CD8-positive, alpha-beta T cell (primary cell): ENCODE measurements at regions of chr10 and their contacts with region 1.

Region 1: DNA sequence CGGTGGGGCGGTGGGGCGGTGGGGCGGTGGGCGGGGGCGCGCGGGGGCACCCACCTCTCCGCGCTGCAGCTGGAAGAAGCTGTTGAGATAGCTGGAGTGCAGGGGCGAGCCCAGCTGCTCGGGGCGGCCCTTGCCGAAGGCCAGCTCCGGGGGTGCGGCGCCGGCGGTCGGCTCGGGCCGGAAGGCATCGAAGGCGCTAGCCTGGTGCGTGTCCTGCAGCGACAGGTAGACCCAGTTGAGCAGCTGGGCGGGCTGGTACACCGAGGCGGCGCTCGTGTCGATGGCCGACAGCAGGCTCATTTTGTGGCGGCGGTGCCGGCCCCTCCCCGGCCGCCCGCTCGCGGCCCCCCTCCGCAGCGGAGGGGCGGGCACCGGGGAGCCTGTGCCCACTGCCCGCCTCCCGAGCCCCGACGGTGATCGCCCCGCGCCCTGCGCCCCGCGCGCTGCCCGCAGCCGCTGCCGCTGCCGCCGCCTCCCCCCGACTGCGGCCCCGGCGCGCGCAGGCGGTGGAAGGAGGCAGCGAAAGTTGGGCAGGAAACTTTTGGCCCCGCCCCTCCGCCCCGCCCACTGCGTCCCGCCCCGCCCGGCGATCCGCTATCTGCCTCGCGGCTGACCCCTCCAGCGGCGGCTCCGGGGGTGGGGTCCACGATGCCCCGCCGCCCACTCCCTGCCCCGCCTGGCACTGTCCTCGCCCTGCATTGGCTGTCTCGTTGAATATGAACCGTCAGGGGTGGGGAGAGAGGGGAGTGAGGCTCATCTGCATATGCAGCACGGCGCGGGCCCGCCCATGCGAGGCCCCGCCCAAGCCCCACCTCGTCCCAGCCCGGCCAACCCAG is at the start of gene ZCCHC24:
- DNase-seq: peak; percentile 90 to 98 (median 94)
- ATAC-seq: peak; percentile 93
- H3K4me3 ChIP-seq: peak within 1 kb of the TSS; percentile 55 to 59
- H3K4me3 Mint-ChIP-seq: peak within 1 kb of the TSS; percentile 85
- H3K27ac ChIP-seq: peak within 1 kb of the TSS; percentile 14 to 22
- H3K27ac Mint-ChIP-seq: peak within 1 kb of the TSS; percentile 67
- H3K4me1 ChIP-seq: peaks cover 24% of the 10 kb centered on the region
- H3K4me1 Mint-ChIP-seq: peaks cover 24% of the 10 kb centered on the region
- H3K27me3 ChIP-seq: no peaks in the 10 kb centered on the region
- H3K27me3 Mint-ChIP-seq: no peaks in the 10 kb centered on the region
- CTCF ChIP-seq: no peak
- total RNA-seq, gene ZCCHC24: 1.1 to 1.9 TPM

Region 2: GRCh38 chr10:78029269-78030226 is 1415.8 kb before region 1 on chr10 and contains the start of gene POLR3A:
- CTCF ChIA-PET with region 1: no interaction called
- POLR2A ChIA-PET with region 1: no interaction called
- intact Hi-C with region 1: loop called (anchors 2 kb)
- DNase-seq: peak; percentile 81 to 97 (median 90)
- ATAC-seq: peak; percentile 56
- H3K4me3 ChIP-seq: peak within 1 kb of the TSS; percentile 92 to 99
- H3K4me3 Mint-ChIP-seq: peak within 1 kb of the TSS; percentile 99
- H3K27ac ChIP-seq: peak within 1 kb of the TSS; percentile 55 to 70
- H3K27ac Mint-ChIP-seq: peak within 1 kb of the TSS; percentile 95
- H3K4me1 ChIP-seq: peaks cover 17% of the 10 kb centered on the region
- H3K4me1 Mint-ChIP-seq: peaks cover 40% of the 10 kb centered on the region
- H3K27me3 ChIP-seq: no peaks in the 10 kb centered on the region
- H3K27me3 Mint-ChIP-seq: no peaks in the 10 kb centered on the region
- CTCF ChIP-seq: peak; percentile 75
- total RNA-seq, gene POLR3A: 5.9 to 7.0 TPM

Region 3: GRCh38 chr10:78972947-78973900 is 472.1 kb before region 1 on chr10:
- CTCF ChIA-PET with region 1: no interaction called
- POLR2A ChIA-PET with region 1: no interaction called
- intact Hi-C with region 1: loop called in 1 of 2 experiments (anchors 5 kb)
- DNase-seq: peak; percentile 11 to 89 (median 68)
- ATAC-seq: peak; percentile 69
- H3K4me3 ChIP-seq: peak overlapping the region; percentile 39 to 54
- H3K4me3 Mint-ChIP-seq: peak overlapping the region; percentile 83
- H3K27ac ChIP-seq: peak overlapping the region in 1 of 2 experiments; percentile 19
- H3K27ac Mint-ChIP-seq: peak overlapping the region; percentile 80
- H3K4me1 ChIP-seq: peaks cover 14% of the 10 kb centered on the region
- H3K4me1 Mint-ChIP-seq: peaks cover 14% of the 10 kb centered on the region
- H3K27me3 ChIP-seq: no peaks in the 10 kb centered on the region
- H3K27me3 Mint-ChIP-seq: no peaks in the 10 kb centered on the region
- CTCF ChIP-seq: no peak

Region 4: DNA sequence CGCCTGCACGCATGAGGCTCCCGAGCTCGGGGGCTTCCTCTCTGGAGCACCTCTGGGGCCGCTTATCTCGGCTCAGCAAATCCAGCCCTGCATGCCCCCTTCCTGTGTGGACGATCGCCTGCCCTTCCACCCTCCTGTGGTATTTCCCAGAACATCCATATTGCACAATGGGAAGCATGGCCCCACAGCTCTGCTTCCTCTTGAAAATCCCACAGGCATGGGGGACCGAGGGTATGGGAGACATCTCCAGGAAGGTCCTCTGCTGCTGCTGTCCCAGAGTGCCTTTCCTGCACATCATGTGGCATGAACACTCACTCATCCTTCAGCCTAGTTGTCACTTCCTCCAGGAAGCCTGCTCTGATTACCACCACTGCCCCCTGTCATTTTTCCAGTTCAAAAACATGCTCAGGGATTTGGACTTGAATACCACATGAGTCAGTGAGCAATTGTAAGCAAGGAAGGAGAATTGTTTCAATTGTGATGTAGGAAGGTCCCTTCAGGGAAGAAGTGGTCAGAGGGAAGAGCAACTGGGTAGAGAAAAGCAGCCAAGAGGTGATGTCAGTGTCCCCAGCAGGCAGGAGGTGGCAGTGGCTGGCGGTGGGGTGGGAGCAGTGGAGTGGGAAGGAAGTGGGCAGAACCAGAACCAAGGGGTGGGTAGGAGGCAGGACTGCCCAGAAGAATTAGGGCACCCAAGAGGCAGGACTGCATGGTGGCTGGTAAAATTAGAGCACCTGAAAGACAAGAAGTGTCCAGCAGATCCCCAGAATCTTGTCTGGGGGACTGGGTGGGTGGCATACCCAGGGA is 444.1 kb before region 1 on chr10:
- CTCF ChIA-PET with region 1: no interaction called
- POLR2A ChIA-PET with region 1: no interaction called
- intact Hi-C with region 1: no loop called
- DNase-seq: no peak
- ATAC-seq: no peak
- H3K4me3 ChIP-seq: no peak overlapping the region
- H3K4me3 Mint-ChIP-seq: no peak overlapping the region
- H3K27ac ChIP-seq: no peak overlapping the region
- H3K27ac Mint-ChIP-seq: no peak overlapping the region
- H3K4me1 ChIP-seq: no peaks in the 10 kb centered on the region
- H3K4me1 Mint-ChIP-seq: peaks cover 8% of the 10 kb centered on the region
- H3K27me3 ChIP-seq: no peaks in the 10 kb centered on the region
- H3K27me3 Mint-ChIP-seq: peaks cover 3% of the 10 kb centered on the region
- CTCF ChIP-seq: no peak

Region 5: GRCh38 chr10:79242620-79243152 is 202.7 kb before region 1 on chr10:
- CTCF ChIA-PET with region 1: no interaction called
- POLR2A ChIA-PET with region 1: no interaction called
- intact Hi-C with region 1: loop called (anchors 2 to 5 kb)
- DNase-seq: peak in 8 of 9 experiments; percentile 13 to 80 (median 51)
- ATAC-seq: peak; percentile 51
- H3K4me3 ChIP-seq: peak overlapping the region; percentile 49 to 61
- H3K4me3 Mint-ChIP-seq: peak overlapping the region; percentile 76
- H3K27ac ChIP-seq: peak overlapping the region in 1 of 2 experiments; percentile 39
- H3K27ac Mint-ChIP-seq: no peak overlapping the region
- H3K4me1 ChIP-seq: peaks cover 33% of the 10 kb centered on the region
- H3K4me1 Mint-ChIP-seq: peaks cover 42% of the 10 kb centered on the region
- H3K27me3 ChIP-seq: no peaks in the 10 kb centered on the region
- H3K27me3 Mint-ChIP-seq: no peaks in the 10 kb centered on the region
- CTCF ChIP-seq: no peak

Region 6: DNA sequence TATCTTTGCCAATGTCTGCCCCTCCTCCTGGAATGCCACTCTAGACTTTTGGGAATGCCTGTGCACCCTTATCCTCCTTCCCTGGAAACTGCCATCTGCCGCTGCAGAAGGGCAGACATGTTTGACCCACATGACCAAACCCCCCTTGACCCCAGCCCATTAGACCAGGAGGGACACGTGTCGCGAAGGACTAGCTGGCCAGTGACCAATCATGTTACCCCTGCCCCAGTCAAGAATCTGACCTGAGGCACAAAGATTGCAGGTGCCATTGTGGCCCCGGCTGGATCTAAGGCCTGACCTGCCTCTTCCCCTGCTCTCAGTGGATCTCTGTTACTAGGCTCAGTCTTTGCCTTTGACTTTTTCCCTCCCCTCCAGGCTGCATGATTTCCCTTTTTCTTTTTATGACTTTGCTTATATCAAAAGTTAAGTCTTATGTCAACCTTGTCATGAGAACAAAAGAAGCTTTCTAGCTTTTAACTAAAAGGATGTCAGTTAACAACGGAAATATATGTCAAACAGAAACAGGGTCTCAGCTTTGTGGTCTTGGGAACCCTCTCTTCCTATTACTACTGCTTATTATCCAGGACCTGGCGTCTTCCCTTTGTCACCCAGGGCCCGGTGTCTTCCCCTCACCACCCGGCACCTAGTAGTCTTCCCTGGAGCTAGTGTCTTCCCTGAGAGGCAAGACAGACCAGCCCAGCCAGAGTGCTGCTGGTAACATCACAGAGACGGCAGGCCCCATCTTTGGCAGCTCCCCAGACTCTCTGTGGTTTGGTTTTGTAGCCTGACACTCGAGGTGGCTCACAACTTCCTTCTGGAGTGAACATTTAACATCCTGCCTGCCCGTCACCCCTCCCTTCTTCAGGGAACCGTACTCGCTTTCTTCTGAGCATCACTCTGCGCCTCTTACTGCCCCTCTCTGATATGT is 122.5 kb before region 1 on chr10:
- CTCF ChIA-PET with region 1: interaction called, 3 read pairs
- POLR2A ChIA-PET with region 1: interaction called, 4 read pairs
- intact Hi-C with region 1: loop called in 1 of 2 experiments (anchors 1 kb)
- DNase-seq: peak; percentile 60 to 93 (median 89)
- ATAC-seq: peak; percentile 89
- H3K4me3 ChIP-seq: peak overlapping the region; percentile 4 to 16
- H3K4me3 Mint-ChIP-seq: peak overlapping the region; percentile 77
- H3K27ac ChIP-seq: peak overlapping the region; percentile 51 to 70
- H3K27ac Mint-ChIP-seq: peak overlapping the region; percentile 95
- H3K4me1 ChIP-seq: peaks cover 68% of the 10 kb centered on the region
- H3K4me1 Mint-ChIP-seq: peaks cover 65% of the 10 kb centered on the region
- H3K27me3 ChIP-seq: no peaks in the 10 kb centered on the region
- H3K27me3 Mint-ChIP-seq: no peaks in the 10 kb centered on the region
- CTCF ChIP-seq: no peak

Region 7: DNA sequence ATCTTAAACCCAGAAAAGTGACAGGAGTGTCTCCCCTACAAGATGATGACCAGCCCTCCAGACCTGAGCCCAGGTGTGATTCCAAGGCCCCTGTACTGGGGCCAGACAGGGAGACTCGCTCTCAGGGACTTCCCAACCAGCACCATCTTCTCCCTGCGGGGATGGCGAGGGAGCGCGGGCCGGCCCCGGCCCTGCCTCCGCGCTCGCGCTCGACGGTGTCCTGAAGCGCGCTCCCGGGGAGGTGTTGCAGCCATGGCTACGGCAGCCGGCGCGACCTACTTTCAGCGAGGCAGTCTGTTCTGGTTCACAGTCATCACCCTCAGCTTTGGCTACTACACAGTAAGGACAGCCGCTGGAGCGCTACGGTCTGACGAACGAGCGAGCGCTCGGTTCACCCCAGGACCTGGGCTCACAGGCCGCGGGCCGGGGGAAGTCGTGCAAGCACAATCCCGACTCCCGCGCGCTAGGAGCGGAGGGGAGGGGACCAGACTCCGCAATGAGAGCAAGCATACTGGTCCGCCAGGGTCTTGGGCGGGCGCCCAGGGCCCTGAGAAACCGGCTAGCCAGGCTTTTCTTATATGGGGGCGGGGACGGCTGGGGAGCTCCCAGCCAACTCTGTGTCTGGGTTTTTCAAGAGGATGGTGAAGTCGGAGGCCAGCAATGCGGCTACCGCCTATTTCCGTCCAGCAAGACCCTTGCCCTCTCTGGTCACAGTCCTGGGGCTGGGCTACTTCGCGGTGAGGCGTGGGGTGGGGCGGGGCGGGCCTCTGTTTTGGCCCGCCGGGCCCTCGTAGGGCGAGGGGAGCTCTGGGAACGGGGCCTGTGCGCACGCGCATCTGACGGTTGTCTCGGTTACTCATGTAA is 633.3 kb after region 1 on chr10 and contains the start of gene TMEM254:
- CTCF ChIA-PET with region 1: no interaction called
- POLR2A ChIA-PET with region 1: no interaction called
- intact Hi-C with region 1: loop called in 1 of 2 experiments (anchors 5 kb)
- DNase-seq: peak; percentile 73 to 92 (median 90)
- ATAC-seq: peak; percentile 85
- H3K4me3 ChIP-seq: peak within 1 kb of the TSS; percentile 90 to 100
- H3K4me3 Mint-ChIP-seq: peak within 1 kb of the TSS; percentile 88
- H3K27ac ChIP-seq: peak within 1 kb of the TSS; percentile 85 to 91
- H3K27ac Mint-ChIP-seq: peak within 1 kb of the TSS; percentile 91
- H3K4me1 ChIP-seq: peaks cover 6% of the 10 kb centered on the region
- H3K4me1 Mint-ChIP-seq: peaks cover 21% of the 10 kb centered on the region
- H3K27me3 ChIP-seq: no peaks in the 10 kb centered on the region
- H3K27me3 Mint-ChIP-seq: no peaks in the 10 kb centered on the region
- CTCF ChIP-seq: no peak
- total RNA-seq, gene TMEM254: 3.5 to 4.0 TPM